ENCODE measurements at regions of chr12 and their contacts with region 1.

Region 1: GRCh38 chr12:106669216-106669615 is 86.4 kb downstream of the RFX4 start:
- DNase-seq: no peak
- CTCF ChIP-seq: no peak

Region 2: DNA sequence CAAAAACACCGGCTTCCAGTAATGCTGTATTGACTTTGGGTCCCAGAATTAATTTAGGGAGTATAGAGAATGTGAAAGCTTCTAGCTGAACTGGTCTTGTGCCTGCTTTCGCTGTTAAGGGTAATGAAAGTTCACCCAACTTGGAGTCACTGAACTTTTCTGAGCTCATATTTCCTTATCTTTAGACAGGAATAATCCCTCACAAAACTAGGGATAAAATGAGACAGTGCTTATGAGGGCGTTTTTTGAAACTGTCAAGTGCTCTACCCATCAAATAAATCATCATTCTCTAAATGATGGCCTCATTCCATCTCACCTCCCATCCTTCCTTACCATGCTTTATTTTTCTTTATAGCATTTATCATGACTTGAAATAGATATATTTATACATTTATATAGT is 11.7 kb before region 1 on chr12:
- CTCF ChIA-PET with region 1: interaction called, 13 read pairs
- POLR2A ChIA-PET with region 1: no interaction called
- DNase-seq: no peak
- CTCF ChIP-seq: no peak

Region 3: DNA sequence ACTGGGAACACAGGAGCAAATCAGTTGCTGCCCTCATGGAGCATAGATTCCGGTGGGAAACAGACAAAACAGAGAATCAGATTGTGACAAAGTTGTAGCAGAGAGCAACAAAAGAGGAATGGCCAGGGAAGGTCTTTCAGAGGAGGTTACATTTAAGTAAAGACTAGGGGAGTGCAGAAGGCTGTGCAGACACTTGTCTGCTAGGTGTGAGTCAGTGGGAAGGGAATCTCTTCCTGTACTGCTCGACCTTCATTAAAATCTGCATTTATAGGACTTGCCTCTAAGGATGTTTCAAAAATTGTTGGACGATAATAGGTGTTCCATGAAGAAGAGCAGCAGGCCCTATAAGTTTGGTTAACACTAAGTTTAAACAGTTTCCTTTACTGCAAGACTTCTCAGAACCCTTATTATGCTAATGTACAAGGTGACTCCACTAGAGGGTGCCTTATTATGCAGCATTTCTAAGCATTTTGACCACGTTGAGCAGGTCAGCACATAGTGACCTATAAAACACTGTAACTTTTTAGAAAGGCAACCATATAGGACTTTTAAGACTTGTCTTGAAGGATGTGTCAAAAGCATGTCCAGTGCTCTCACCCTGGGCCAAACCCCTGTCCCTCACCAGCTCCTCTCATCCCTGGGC is 13.5 kb after region 1 on chr12:
- CTCF ChIA-PET with region 1: no interaction called
- POLR2A ChIA-PET with region 1: no interaction called
- DNase-seq: peak; percentile 30
- CTCF ChIP-seq: peak; percentile 23